ENCODE measurements at regions of chr2 and their contacts with region 1.

Region 1: DNA sequence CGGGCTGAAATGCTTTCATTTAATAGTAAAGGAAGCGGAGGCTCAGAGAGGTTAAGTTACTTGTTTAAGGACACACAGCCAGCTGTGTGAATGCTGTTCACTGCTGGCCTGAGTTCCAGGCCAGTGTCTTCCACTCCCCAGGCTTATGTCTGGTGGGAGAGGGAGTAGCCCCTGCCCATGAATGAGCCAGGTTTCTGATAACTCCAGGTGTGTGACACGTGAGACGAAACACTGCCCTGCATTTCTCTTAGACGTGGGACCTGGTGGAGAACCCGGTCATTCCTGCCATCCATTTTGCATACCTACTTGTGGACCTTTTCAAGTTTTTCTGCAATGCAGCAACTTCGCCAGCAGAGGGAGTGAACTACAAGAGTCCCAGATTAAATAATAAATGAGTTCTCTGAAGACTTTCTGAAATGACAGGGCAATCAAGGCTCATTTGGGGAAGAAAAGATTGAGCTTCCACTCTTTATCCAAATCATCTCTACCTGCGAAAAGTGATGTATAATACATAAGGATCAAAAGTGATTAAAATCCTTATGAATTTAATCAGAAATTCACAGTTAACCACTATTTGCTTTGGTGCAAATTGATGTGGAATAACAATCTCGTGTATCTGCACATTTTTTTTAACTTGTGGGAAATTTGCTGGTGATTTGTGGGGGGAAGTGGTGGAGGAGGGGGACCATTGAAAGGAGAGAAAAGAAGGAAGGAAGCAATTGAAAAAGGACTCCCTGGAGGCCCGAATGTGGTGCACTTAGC is 79.4 kb upstream of the ASB18 start:
- DNase-seq: peak in 13 of 14 experiments; percentile 15 to 73 (median 37)
- ATAC-seq: peak; percentile 51
- H3K4me3 ChIP-seq: no peak overlapping the region
- H3K4me3 Mint-ChIP-seq: no peak overlapping the region
- H3K27ac ChIP-seq: no peak overlapping the region
- H3K27ac Mint-ChIP-seq: no peak overlapping the region
- H3K4me1 ChIP-seq: no peaks in the 10 kb centered on the region
- H3K4me1 Mint-ChIP-seq: no peaks in the 10 kb centered on the region
- H3K27me3 ChIP-seq: no peaks in the 10 kb centered on the region
- H3K27me3 Mint-ChIP-seq: peaks cover 3% of the 10 kb centered on the region
- CTCF ChIP-seq: peak; percentile 91

Region 2: DNA sequence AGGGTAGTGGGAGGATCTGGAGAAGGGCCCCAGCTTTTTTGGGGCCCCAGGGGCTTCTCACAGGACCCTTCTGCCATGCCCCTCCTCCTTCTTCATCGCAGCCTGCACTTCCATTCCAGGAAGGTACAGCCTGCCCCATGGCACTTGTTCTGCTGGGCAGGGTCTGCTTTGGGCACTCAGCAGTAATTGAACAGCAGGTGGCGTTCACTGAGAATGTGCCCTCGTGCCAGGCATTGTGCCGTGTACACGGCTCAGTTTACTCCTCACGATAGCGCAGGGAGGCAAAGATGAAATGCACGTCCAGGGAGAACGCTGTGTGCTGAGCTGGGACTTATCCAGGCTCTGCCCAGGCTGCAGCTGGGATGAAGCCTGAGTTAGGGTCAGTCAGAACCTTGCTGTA is 24.5 kb before region 1 on chr2:
- CTCF ChIA-PET with region 1: no interaction called
- POLR2A ChIA-PET with region 1: no interaction called
- intact Hi-C with region 1: no loop called
- DNase-seq: no peak
- ATAC-seq: no peak
- H3K4me3 ChIP-seq: no peak overlapping the region
- H3K4me3 Mint-ChIP-seq: no peak overlapping the region
- H3K27ac ChIP-seq: no peak overlapping the region
- H3K27ac Mint-ChIP-seq: no peak overlapping the region
- H3K4me1 ChIP-seq: no peaks in the 10 kb centered on the region
- H3K4me1 Mint-ChIP-seq: no peaks in the 10 kb centered on the region
- H3K27me3 ChIP-seq: no peaks in the 10 kb centered on the region
- H3K27me3 Mint-ChIP-seq: peaks cover 12% of the 10 kb centered on the region
- CTCF ChIP-seq: no peak

Region 3: GRCh38 chr2:236512902-236513435 is 169.4 kb after region 1 on chr2:
- CTCF ChIA-PET with region 1: no interaction called
- POLR2A ChIA-PET with region 1: no interaction called
- intact Hi-C with region 1: no loop called
- DNase-seq: peak; percentile 52 to 82 (median 65)
- ATAC-seq: peak; percentile 93
- H3K4me3 ChIP-seq: no peak overlapping the region
- H3K4me3 Mint-ChIP-seq: no peak overlapping the region
- H3K27ac ChIP-seq: no peak overlapping the region
- H3K27ac Mint-ChIP-seq: no peak overlapping the region
- H3K4me1 ChIP-seq: peaks cover 7% of the 10 kb centered on the region
- H3K4me1 Mint-ChIP-seq: no peaks in the 10 kb centered on the region
- H3K27me3 ChIP-seq: no peaks in the 10 kb centered on the region
- H3K27me3 Mint-ChIP-seq: no peaks in the 10 kb centered on the region
- CTCF ChIP-seq: peak; percentile 89

Region 4: GRCh38 chr2:237060534-237061312 is 717.1 kb after region 1 on chr2:
- CTCF ChIA-PET with region 1: no interaction called
- POLR2A ChIA-PET with region 1: no interaction called
- intact Hi-C with region 1: loop called in 1 of 2 experiments (anchors 1 kb)
- DNase-seq: peak in 7 of 14 experiments; percentile 6 to 62 (median 23)
- ATAC-seq: peak; percentile 48
- H3K4me3 ChIP-seq: no peak overlapping the region
- H3K4me3 Mint-ChIP-seq: no peak overlapping the region
- H3K27ac ChIP-seq: no peak overlapping the region
- H3K27ac Mint-ChIP-seq: no peak overlapping the region
- H3K4me1 ChIP-seq: peaks cover 5% of the 10 kb centered on the region
- H3K4me1 Mint-ChIP-seq: no peaks in the 10 kb centered on the region
- H3K27me3 ChIP-seq: no peaks in the 10 kb centered on the region
- H3K27me3 Mint-ChIP-seq: peaks cover 5% of the 10 kb centered on the region
- CTCF ChIP-seq: peak; percentile 51

Region 5: GRCh38 chr2:237072067-237072931 is 728.7 kb after region 1 on chr2:
- CTCF ChIA-PET with region 1: no interaction called
- POLR2A ChIA-PET with region 1: no interaction called
- intact Hi-C with region 1: loop called in 1 of 2 experiments (anchors 1 kb)
- DNase-seq: peak; percentile 49 to 82 (median 68)
- ATAC-seq: peak; percentile 48
- H3K4me3 ChIP-seq: no peak overlapping the region
- H3K4me3 Mint-ChIP-seq: no peak overlapping the region
- H3K27ac ChIP-seq: no peak overlapping the region
- H3K27ac Mint-ChIP-seq: no peak overlapping the region
- H3K4me1 ChIP-seq: no peaks in the 10 kb centered on the region
- H3K4me1 Mint-ChIP-seq: no peaks in the 10 kb centered on the region
- H3K27me3 ChIP-seq: no peaks in the 10 kb centered on the region
- H3K27me3 Mint-ChIP-seq: no peaks in the 10 kb centered on the region
- CTCF ChIP-seq: peak; percentile 98

Measured in CD4-positive, alpha-beta T cell (primary cell).